ENCODE measurements at regions of chr10 and their contacts with region 1.

Region 1: DNA sequence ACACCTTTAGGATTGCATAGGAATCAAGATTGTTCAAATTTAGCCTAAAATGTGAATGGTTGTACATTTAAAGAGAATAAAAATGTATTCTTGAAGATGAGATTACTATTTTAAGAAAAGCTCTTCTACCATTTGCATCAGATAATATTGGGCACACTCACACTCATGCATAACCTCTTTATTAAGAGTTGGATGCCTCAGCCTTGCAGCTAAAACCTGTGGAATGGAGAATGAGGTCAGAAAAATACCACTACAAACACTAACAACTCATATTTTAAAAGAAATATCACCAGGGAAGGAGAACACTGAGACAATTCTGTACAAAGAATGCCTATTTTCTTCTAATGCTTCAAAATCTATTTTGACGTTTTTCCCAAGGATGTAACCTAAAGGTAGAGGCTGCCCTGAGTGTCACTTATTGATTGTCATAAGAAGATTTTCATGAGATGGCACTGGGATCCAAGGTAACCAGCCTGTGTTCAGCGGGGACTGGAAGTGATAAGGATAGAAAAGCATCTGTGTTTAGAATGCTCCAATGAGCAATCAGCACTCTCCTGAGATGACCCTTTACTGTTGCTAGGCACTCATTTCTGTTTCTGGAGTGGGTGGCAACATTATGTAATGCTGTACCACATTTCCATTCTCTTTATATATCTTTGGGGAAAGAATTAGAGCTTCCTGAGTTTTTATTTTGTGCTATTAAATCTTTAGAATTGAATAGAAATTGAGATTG is 26.6 kb downstream of the REEP3 start:
- DNase-seq: no peak
- ATAC-seq: no peak
- H3K4me3 ChIP-seq: no peak overlapping the region
- H3K4me3 Mint-ChIP-seq: no peak overlapping the region
- H3K27ac ChIP-seq: no peak overlapping the region
- H3K27ac Mint-ChIP-seq: no peak overlapping the region
- H3K4me1 ChIP-seq: peaks cover 0 to 2% of the 10 kb centered on the region in 2 experiments
- H3K4me1 Mint-ChIP-seq: peaks cover 13 to 22% (median 15%) of the 10 kb centered on the region in 3 donors
- H3K27me3 ChIP-seq: no peaks in the 10 kb centered on the region
- H3K27me3 Mint-ChIP-seq: no peaks in the 10 kb centered on the region

Region 2: GRCh38 chr10:63323701-63324494 is 223.9 kb before region 1 on chr10:
- CTCF ChIA-PET with region 1: no interaction called
- POLR2A ChIA-PET with region 1: interaction called in 1 of 2 experiments, 12 read pairs
- DNase-seq: no peak
- ATAC-seq: no peak
- H3K4me3 ChIP-seq: no peak overlapping the region
- H3K4me3 Mint-ChIP-seq: no peak overlapping the region
- H3K27ac ChIP-seq: no peak overlapping the region
- H3K27ac Mint-ChIP-seq: peak overlapping the region in 1 of 2 donors; percentile 21
- H3K4me1 ChIP-seq: peaks cover 0 to 3% of the 10 kb centered on the region in 2 experiments
- H3K4me1 Mint-ChIP-seq: peaks cover 4 to 15% (median 11%) of the 10 kb centered on the region in 3 donors
- H3K27me3 ChIP-seq: no peaks in the 10 kb centered on the region
- H3K27me3 Mint-ChIP-seq: no peaks in the 10 kb centered on the region

Region 3: GRCh38 chr10:63491588-63492316 is 56.0 kb before region 1 on chr10:
- CTCF ChIA-PET with region 1: no interaction called
- POLR2A ChIA-PET with region 1: no interaction called
- DNase-seq: no peak
- ATAC-seq: no peak
- H3K4me3 ChIP-seq: no peak overlapping the region
- H3K4me3 Mint-ChIP-seq: no peak overlapping the region
- H3K27ac ChIP-seq: no peak overlapping the region
- H3K27ac Mint-ChIP-seq: no peak overlapping the region
- H3K4me1 ChIP-seq: no peaks in the 10 kb centered on the region
- H3K4me1 Mint-ChIP-seq: peaks cover 12 to 19% (median 15%) of the 10 kb centered on the region in 3 donors
- H3K27me3 ChIP-seq: no peaks in the 10 kb centered on the region
- H3K27me3 Mint-ChIP-seq: no peaks in the 10 kb centered on the region

Measured in T-cell (primary cell).